ENCODE measurements at regions of chr9 and their contacts with region 1.

Region 1: GRCh38 chr9:27529316-27530278 is at the start of gene MOB3B:
- DNase-seq: peak; percentile 94
- ATAC-seq: peak; percentile 94
- total RNA-seq, gene MOB3B: 1.5 TPM

Region 2: GRCh38 chr9:27333241-27334052 is 196.2 kb before region 1 on chr9:
- intact Hi-C with region 1: loop called (anchors 1 kb)
- DNase-seq: no peak
- ATAC-seq: peak; percentile 92

Region 3: GRCh38 chr9:27353474-27354229 is 175.9 kb before region 1 on chr9:
- intact Hi-C with region 1: loop called (anchors 5 kb)
- DNase-seq: no peak
- ATAC-seq: no peak

Region 4: DNA sequence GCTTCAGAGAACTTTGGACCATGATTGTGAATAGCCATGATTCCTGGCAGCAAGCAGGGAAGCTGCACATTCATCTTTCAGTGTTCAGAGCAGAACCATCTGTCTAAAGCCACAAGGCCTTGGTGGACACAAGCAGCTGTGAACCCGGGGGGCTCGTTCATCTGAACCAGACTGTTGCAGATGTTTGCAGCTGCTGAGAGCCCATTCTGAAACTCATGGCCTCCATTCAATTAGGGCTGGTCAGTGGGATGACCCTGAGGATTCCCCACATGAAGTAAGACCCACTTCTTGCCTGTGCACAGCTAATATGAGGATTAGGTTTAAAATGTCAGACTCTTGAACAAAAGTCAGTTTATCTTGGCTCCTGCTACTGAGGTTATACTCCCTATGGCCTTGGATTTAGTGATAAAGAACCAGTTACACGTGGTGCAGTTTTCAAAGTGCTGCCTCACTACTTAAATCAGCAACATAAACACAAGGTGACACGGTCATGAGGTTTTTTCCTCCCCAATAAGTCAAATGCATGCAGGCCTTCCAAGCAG is 115.3 kb before region 1 on chr9:
- intact Hi-C with region 1: loop called (anchors 5 kb)
- DNase-seq: peak; percentile 61
- ATAC-seq: peak; percentile 86

Region 5: GRCh38 chr9:27430750-27431535 is 98.7 kb before region 1 on chr9:
- intact Hi-C with region 1: loop called (anchors 5 kb)
- DNase-seq: no peak
- ATAC-seq: no peak

Measured in Right ventricle myocardium inferior (tissue), 1 donor.